ENCODE measurements at regions of chr19 and their contacts with region 1.

Region 1: GRCh38 chr19:4064496-4065260 is 2.0 kb downstream of the ZBTB7A start:
- DNase-seq: peak; percentile 50
- H3K4me3 ChIP-seq: peak overlapping the region; percentile 70 to 82
- H3K27ac ChIP-seq: peak overlapping the region; percentile 98
- H3K4me1 ChIP-seq: peaks cover 45% of the 10 kb centered on the region
- H3K27me3 ChIP-seq: no peaks in the 10 kb centered on the region
- CTCF ChIP-seq: no peak
- POLR2A ChIP-seq: peak; percentile 20

Region 2: DNA sequence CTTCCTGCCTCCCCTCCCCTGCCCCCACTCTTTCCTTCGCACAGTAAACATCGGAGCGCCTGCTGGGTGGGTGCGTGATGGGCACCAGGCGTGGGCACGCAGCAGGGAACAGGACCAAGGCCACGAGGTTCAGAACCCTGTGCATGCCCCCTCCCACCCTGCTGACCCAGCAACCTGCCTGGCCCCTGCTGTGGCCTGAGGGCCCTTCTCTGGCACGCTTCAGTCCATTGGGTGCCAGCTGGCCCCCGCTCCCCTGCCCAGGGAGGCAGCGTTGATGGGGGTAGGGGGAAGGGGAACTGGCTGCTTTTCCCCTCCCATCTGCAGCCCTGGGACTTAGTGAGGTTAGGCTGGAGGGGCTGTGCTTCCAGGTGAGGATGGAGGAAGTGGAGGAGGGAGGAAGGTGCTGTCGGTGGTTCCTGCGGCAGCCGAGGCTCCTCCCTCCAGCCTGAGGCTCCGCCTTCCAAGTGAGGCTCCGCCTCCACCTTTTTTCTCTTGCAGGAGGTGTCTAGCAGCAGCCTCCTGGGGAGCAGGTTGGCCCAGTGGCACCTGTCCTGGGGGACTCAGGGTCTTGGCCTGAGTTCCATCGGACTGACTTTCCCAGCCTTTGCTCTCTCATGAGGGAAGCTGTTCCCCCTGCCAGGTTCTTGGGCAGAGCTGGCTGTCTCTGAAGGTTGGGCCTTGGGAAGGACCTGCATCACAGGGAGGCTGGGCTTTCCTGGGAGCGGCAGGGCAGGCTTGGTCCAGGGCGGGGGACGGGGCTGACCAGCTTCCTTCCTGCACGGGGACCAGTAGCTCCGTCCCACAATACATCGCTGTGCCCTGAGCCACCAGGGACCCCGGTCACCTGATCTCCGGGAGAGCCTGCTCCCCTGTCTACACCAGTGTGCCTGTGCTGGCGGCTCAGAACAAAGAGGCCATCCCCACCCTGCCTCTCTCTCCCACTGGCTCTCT is 49.9 kb before region 1 on chr19:
- intact Hi-C with region 1: loop called (anchors 1 kb)
- DNase-seq: no peak
- H3K4me3 ChIP-seq: no peak overlapping the region
- H3K27ac ChIP-seq: peak overlapping the region; percentile 37 to 72
- H3K4me1 ChIP-seq: peaks cover 26% of the 10 kb centered on the region
- H3K27me3 ChIP-seq: no peaks in the 10 kb centered on the region
- CTCF ChIP-seq: no peak
- POLR2A ChIP-seq: no peak

Region 3: DNA sequence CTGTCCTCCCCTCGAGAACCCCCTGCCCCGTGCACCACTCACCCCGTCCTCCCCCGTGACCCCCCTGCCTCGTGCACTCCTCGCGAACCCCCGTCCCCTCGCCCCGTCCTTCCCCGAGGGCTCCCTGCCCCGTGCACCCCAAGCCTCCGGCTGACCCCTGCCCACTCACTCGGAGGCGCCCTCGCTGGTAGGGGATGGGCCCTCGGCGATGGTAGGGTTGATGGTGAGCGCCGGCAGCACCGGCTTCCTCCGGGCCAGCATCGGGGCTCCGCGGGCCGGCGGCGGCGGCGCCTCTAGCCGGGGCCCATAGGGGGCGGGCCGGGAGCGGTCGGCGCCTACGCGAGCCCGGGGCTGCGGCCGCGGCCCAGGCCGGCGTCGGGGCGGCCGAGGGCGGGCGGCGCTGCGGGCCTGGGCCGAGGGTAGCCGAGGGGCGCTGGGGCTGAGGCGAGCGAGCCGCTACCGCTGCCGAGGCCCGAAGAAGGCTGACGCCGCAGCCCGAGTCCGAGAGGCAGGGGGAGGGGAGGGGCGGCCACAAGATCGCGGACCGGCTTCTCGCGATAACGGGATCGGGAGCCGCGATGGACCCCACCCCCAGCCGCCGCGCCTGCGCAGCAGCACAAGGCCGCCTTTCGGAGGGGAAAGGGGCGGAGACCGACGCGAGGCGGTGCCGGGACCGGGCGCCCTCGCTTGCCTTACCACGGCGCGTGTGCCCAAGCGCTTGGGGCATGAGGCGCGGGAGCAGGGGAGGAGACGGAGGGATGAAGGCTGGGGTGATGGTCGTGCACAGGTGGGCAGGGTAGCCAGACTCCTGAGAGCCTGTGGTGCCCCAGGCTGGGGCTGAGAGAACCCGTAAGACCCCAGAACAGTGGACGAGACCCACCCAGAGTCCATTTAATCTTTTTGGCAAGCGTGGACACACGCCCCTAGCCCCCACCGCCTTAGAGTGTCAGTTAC is 59.2 kb after region 1 on chr19 and contains the start of gene MAP2K2:
- intact Hi-C with region 1: loop called (anchors 5 kb)
- DNase-seq: peak; percentile 92
- H3K4me3 ChIP-seq: peak within 1 kb of the TSS; percentile 89 to 95
- H3K27ac ChIP-seq: peak within 1 kb of the TSS; percentile 59 to 73
- H3K4me1 ChIP-seq: peaks cover 12% of the 10 kb centered on the region
- H3K27me3 ChIP-seq: no peaks in the 10 kb centered on the region
- CTCF ChIP-seq: no peak
- POLR2A ChIP-seq: peak; percentile 65
- total RNA-seq, gene MAP2K2: 104 to 145 TPM

Region 4: GRCh38 chr19:4232958-4233853 is 168.5 kb after region 1 on chr19:
- intact Hi-C with region 1: no loop called
- DNase-seq: no peak
- H3K4me3 ChIP-seq: no peak overlapping the region
- H3K27ac ChIP-seq: no peak overlapping the region
- H3K4me1 ChIP-seq: no peaks in the 10 kb centered on the region
- H3K27me3 ChIP-seq: peaks cover 5% of the 10 kb centered on the region
- CTCF ChIP-seq: peak in 3 of 4 experiments; percentile 10 to 38 (median 35)
- POLR2A ChIP-seq: no peak

Measured in prostate gland (tissue), 2 donors.